ENCODE measurements at regions of chr3 and their contacts with region 1.

Region 1: GRCh38 chr3:145159640-145160039 is 1001.3 kb downstream of the PLOD2 start:
- DNase-seq: no peak
- H3K4me3 ChIP-seq: no peak overlapping the region
- H3K27ac ChIP-seq: no peak overlapping the region
- H3K4me1 ChIP-seq: no peaks in the 10 kb centered on the region
- H3K27me3 ChIP-seq: no peaks in the 10 kb centered on the region
- CTCF ChIP-seq: no peak

Region 2: DNA sequence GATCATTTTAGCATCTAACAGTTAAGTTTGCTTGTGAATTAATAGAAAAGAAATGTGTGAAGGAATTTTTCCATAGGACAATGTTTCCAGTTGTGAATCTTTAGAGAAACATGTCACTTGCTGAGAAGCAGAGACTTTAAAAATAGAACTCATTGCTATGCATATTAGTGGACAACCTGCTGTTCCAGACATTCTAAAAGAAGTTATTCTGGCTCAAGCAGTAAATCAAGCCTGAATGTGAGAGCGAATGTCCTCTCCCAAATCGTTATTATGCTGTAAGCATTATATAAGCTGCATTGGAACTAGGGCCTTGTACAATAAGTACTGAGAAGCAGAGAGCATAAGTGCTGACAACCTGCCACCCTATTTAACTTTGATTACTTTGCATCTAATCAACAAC is 10.5 kb after region 1 on chr3:
- CTCF ChIA-PET with region 1: no interaction called
- POLR2A ChIA-PET with region 1: no interaction called
- intact Hi-C with region 1: loop called (anchors 1 kb)
- DNase-seq: no peak
- H3K4me3 ChIP-seq: no peak overlapping the region
- H3K27ac ChIP-seq: no peak overlapping the region
- H3K4me1 ChIP-seq: no peaks in the 10 kb centered on the region
- H3K27me3 ChIP-seq: no peaks in the 10 kb centered on the region
- CTCF ChIP-seq: no peak

Region 3: GRCh38 chr3:145411605-145412004 is 252.0 kb after region 1 on chr3:
- CTCF ChIA-PET with region 1: no interaction called
- POLR2A ChIA-PET with region 1: no interaction called
- intact Hi-C with region 1: no loop called
- DNase-seq: no peak
- H3K4me3 ChIP-seq: no peak overlapping the region
- H3K27ac ChIP-seq: no peak overlapping the region
- H3K4me1 ChIP-seq: no peaks in the 10 kb centered on the region
- H3K27me3 ChIP-seq: no peaks in the 10 kb centered on the region
- CTCF ChIP-seq: no peak

Measured in PC-9 (cell line).